Posterior cingulate gyrus (tissue), 11 donors: ENCODE measurements at regions of chr17 and their contacts with region 1.

Region 1: DNA sequence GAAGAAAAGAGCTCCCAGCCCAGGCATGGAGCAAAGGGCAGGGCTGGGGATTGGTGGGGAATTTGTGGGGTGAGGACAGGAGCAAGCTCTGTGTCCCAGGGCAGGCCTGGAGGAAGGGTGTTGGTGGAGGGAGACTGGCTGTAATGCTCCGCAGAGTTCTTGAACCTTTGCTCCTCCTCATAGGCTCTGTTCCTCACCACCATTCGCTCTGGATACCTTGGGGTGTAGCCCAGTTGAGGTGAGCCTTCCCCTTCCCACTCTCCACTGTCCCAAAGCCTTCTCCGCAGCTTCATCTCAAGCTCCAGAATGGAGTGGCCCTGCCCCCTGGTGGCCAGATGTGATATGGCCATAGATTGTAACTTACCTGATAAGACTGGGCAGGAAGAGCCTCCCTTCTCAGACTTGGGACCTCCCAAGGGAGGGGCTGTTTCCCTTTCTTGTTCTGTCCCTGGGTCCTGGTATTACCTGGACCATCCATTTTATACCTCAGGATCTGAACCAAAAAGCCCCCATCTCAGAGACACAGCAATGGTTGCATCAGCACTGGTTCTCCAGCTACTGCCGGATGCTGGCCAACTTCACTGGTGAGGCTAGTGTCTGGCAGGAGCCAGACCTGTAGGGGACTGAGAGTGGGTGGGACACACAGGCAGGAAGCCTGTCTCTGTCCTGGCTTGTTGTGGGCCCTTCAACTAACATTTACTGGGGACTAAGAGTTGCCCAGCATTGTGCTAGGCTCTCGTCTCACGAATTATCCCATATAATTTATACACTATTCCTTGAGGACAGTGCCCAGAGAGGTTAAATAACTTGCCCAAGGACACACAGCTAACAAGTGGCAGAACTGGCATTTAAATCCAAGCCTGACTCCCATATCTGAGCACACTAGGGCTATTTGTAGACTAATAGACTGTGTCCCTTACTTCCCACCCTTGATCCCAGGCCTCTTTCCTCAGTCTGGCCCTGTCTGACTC is 19.1 kb upstream of the STAC2 start:
- DNase-seq: peak; percentile 76 to 98 (median 90)

Region 2: GRCh38 chr17:39209317-39210092 is 35.4 kb before region 1 on chr17:
- intact Hi-C with region 1: loop called (anchors 5 kb)
- DNase-seq: peak in 8 of 10 donors; percentile 32 to 96 (median 75)